ENCODE measurements at regions of chr1 and their contacts with region 1.

Region 1: DNA sequence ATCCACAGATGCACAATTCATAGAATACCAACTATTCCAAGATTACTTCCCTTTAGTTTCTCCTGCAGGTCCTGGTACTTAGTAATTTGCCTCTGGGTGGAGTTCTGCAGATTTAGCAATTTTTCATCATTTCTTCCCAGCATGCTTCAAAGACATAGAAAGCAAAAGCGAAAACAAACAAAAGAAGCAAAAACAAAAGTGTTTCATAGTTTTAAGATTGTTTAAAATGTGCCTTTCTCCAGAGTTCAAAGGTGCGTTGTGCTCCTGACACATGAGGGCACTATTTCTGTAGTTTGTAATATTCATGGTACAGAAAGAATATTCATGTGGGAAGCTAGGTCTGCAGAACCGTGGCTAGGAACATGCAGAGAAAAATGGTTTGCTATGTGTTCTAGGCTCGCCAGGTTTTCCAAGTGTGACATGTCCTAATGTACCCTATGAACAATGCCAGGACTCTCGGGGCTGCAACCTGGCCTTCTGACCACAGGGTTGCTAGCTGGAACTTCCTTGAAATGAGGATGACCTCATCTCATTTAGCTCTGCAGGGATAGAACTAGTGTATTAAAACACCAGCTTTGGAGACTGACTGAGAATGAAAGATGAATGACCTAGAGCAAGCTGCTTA is 30.0 kb upstream of the RCSD1 start:
- DNase-seq: peak in 9 of 10 donors; percentile 20 to 72 (median 39)
- ATAC-seq: peak; percentile 82 to 87
- H3K4me3 Mint-ChIP-seq: peak overlapping the region in 9 of 10 donors; percentile 52 to 78 (median 68)
- H3K27ac Mint-ChIP-seq: peak overlapping the region in 9 of 10 donors; percentile 1 to 90 (median 41)
- H3K4me1 Mint-ChIP-seq: peaks cover 23 to 47% (median 44%) of the 10 kb centered on the region in 4 donors
- H3K27me3 Mint-ChIP-seq: no peaks in the 10 kb centered on the region

Region 2: DNA sequence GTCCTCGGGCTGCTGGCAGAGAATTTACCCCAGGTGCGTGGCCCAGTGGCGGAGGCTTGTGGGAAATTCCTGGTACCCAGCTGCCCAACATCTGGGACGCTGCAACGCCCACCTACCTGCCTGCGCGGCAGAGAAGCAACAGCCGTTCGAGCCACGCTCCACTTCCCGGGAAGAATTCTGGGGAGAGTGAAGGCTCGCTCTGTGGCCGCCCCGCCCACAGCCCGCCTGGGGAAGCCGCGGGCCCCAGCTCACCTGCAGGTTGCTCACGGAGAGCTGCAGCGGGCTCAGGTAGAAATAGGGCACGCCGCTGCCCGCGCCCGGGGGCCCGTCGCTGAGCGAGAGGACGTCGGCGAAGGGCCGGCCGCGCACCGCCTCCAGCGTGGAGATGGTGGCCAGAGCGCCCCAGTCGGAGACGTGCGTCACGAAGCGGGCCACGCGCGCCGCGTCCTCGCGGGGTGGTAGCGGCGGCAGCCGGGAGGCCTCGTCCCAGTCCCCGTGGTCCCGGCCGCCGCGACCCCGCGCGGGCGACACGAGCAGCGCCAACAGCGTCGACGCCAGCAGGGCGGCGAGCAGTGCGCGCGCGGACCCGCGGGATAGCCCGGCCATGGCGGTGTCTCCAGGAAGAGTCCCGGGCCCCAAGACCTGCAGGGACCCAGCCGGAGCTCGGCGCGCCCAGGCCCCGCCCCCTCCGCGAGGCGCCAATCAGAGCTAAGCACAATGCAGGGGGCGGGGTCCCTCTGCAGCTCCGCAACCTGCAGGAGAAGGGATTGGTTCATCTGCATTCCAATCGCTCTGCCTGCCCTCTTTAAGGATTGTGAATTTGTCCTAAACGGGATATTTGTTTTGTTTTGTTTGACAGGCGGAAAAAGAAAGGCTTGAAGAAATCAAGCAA is 46.7 kb before region 1 on chr1 and contains the start of gene CREG1:
- POLR2A ChIA-PET with region 1: no interaction called
- DNase-seq: peak; percentile 81 to 93 (median 87)
- ATAC-seq: peak; percentile 97
- H3K4me3 Mint-ChIP-seq: peak within 1 kb of the TSS; percentile 81 to 96 (median 93)
- H3K27ac Mint-ChIP-seq: peak within 1 kb of the TSS; percentile 40 to 91 (median 79)
- H3K4me1 Mint-ChIP-seq: peaks cover 21 to 51% (median 43%) of the 10 kb centered on the region in 4 donors
- H3K27me3 Mint-ChIP-seq: peaks cover 0 to 1% (median 0%) of the 10 kb centered on the region in 5 donors
- polyA plus RNA-seq, gene CREG1: 14.6 to 26.8 (median 23.3) TPM

Region 3: DNA sequence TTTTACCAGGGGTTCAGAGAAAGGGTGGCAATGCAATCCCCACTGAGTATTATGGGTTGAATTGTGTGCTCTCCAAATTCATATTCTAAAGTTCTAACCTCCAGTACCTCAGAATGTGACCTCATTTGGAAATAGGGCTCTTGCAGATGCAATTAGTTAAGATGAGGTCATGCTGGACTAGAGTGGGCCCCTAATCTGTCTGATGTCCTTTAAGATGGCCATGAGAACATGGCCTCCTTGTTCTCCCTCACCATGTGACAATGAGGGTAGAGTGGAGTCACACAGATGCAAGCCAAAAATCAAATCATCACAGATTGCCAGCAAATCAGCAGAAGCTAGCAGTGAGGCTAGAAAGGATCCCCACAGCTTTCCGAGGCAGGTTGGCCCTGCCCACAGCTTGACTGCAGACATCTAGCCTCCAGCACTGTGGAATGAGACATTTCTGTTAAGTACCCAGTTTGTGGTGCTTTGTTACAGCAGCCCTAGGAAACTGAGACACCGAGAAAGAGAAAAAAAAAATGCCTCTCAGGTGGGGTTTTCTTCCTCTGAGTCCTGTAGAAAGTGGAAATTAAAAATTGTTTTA is 21.0 kb before region 1 on chr1:
- POLR2A ChIA-PET with region 1: no interaction called
- DNase-seq: no peak
- ATAC-seq: no peak
- H3K4me3 Mint-ChIP-seq: no peak overlapping the region
- H3K27ac Mint-ChIP-seq: no peak overlapping the region
- H3K4me1 Mint-ChIP-seq: no peaks in the 10 kb centered on the region
- H3K27me3 Mint-ChIP-seq: peaks cover 0 to 5% (median 3%) of the 10 kb centered on the region in 5 donors

Region 4: GRCh38 chr1:167617153-167618147 is 17.4 kb after region 1 on chr1:
- POLR2A ChIA-PET with region 1: interaction called, 49 read pairs
- DNase-seq: peak in 3 of 10 donors; percentile 14 to 68 (median 49)
- ATAC-seq: peak; percentile 57 to 80
- H3K4me3 Mint-ChIP-seq: peak overlapping the region; percentile 47 to 85 (median 79)
- H3K27ac Mint-ChIP-seq: peak overlapping the region; percentile 81 to 99 (median 91)
- H3K4me1 Mint-ChIP-seq: peaks cover 48 to 86% (median 66%) of the 10 kb centered on the region in 4 donors
- H3K27me3 Mint-ChIP-seq: no peaks in the 10 kb centered on the region

Region 5: DNA sequence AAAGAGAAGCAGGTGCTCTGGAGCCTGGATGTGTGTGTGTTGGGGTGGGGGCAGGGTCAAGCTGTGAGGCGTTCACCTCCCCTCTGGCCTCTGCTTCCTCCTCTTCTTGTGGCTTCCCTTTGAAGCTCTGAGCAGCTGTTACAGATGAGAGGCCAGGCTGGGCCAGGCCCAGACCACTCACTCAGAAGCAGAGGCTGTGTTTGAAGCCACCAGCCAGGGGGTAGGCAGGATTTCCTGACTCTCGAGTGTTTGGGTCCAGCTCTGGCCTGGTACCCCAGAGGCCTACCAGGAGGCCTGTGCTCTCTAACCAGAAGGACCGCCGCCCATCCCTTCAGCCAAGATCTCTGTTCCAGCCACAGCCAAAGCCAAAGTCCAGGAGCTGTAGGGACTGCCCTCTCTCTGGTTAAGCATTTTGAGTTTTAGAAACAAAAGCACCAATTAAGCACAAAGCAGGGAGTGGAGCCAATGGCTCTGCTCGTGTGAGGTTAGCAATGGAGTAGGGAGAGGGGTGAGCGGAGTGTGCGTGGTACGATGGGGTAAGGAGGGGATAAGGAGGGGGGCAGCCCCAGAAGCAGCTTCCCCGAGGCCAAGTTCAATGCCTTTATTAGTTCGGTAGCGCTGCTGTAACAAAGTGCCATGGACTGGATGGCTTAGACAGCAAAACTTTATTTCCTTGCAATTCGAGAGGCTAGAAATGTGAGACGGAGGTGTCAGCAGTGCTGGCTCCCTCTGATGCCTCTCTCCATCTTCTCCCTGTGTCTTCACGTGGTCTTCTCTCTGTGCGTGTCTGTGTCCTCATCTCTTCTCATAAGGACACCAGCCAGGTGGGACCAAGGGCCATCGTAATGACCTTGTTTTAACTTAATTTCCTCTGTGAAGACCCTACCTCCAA is 50.4 kb after region 1 on chr1:
- POLR2A ChIA-PET with region 1: interaction called, 12 read pairs
- DNase-seq: no peak
- ATAC-seq: peak; percentile 52 to 57
- H3K4me3 Mint-ChIP-seq: peak overlapping the region; percentile 45 to 86 (median 74)
- H3K27ac Mint-ChIP-seq: peak overlapping the region; percentile 88 to 97 (median 93)
- H3K4me1 Mint-ChIP-seq: peaks cover 59 to 95% (median 91%) of the 10 kb centered on the region in 4 donors
- H3K27me3 Mint-ChIP-seq: no peaks in the 10 kb centered on the region

Region 6: GRCh38 chr1:167687919-167688519 is 88.0 kb after region 1 on chr1:
- POLR2A ChIA-PET with region 1: interaction called, 14 read pairs
- DNase-seq: peak; percentile 57 to 87 (median 77)
- ATAC-seq: peak; percentile 75 to 83
- H3K4me3 Mint-ChIP-seq: peak overlapping the region in 2 of 10 donors; percentile 23 to 45
- H3K27ac Mint-ChIP-seq: peak overlapping the region; percentile 29 to 89 (median 72)
- H3K4me1 Mint-ChIP-seq: peaks cover 15 to 38% (median 30%) of the 10 kb centered on the region in 4 donors
- H3K27me3 Mint-ChIP-seq: no peaks in the 10 kb centered on the region

Region 7: GRCh38 chr1:167708940-167709389 is 108.9 kb after region 1 on chr1:
- POLR2A ChIA-PET with region 1: no interaction called
- DNase-seq: no peak
- ATAC-seq: no peak
- H3K4me3 Mint-ChIP-seq: no peak overlapping the region
- H3K27ac Mint-ChIP-seq: peak overlapping the region; percentile 35 to 88 (median 75)
- H3K4me1 Mint-ChIP-seq: peaks cover 9 to 46% (median 24%) of the 10 kb centered on the region in 4 donors
- H3K27me3 Mint-ChIP-seq: peaks cover 0 to 2% (median 0%) of the 10 kb centered on the region in 5 donors

Measured in naive thymus-derived CD8-positive, alpha-beta T cell (primary cell).